GM13976 (cell line): ENCODE measurements at regions of chr5 and their contacts with region 1.

Region 1: DNA sequence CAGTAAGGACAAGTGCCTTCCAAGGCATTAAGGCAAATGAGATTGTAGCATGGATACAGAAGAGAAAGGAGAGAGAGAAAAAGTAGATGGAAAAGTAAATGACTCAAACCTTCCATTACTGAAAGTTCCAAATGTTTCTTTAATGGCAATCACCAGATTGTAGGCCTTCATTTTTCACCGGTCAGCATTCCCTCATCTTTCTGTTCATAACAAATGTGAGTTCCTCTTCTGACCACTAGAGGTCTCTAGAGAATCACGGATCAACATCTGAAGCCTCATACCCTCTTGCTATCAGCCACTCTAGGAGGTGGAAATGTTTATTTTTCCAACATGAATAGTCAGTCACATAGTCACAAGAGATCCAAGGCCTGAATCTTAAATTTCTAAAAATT is 73.6 kb upstream of the RPS23 start:
- DNase-seq: peak; percentile 50
- CTCF ChIP-seq: peak; percentile 58

Region 2: GRCh38 chr5:83473346-83474163 is 1121.8 kb after region 1 on chr5:
- in situ Hi-C with region 1: loop called (anchors 10 kb)
- DNase-seq: peak; percentile 87
- CTCF ChIP-seq: peak; percentile 74

Region 3: GRCh38 chr5:83564069-83564749 is 1212.5 kb after region 1 on chr5:
- in situ Hi-C with region 1: loop called (anchors 10 kb)
- DNase-seq: peak; percentile 11
- CTCF ChIP-seq: peak; percentile 21